ENCODE measurements at regions of chr19 and their contacts with region 1.

Region 1: DNA sequence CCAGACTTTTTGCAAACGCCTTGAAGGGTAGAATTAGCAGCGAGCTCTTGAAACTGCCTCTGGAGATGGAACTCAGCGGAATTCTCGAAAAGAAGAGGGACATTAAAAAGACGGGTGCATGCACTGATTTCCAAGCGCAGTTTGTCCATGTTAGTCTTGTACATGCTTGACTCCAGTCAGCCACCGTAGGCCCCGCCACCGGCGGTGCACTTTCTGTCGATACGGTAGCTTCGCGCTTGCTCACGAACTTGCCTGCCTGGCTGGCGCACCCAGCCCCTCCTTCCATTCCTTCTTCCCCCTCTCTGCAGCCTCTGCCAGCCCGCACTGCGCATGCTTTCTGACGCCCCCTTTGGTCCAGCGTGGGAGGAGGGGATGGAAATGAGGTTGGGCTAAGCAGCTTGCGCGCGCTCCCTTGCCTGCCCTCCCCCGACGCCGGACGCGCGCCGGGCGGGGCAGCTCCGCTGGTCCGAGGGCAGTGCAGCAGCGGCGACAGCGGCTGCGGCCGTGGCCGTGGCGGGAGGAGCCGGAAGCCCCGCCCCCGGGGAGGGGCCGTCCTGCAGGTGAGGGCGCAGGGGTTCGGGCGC is at the start of gene ZNF575:
- DNase-seq: peak; percentile 88 to 93 (median 92)
- H3K4me3 ChIP-seq: peak within 1 kb of the TSS; percentile 65
- H3K27ac ChIP-seq: peak within 1 kb of the TSS; percentile 5 to 74
- H3K4me1 ChIP-seq: peaks cover 5% of the 10 kb centered on the region
- H3K27me3 ChIP-seq: no peaks in the 10 kb centered on the region
- CTCF ChIP-seq: peak in 1 of 3 donors; percentile 10
- EP300 ChIP-seq: no peak
- POLR2A ChIP-seq: no peak
- total RNA-seq, gene ZNF575: 1.3 to 5.9 (median 3.9) TPM

Region 2: GRCh38 chr19:43595999-43596841 is 63.2 kb after region 1 on chr19 and contains the starts of genes IRGQ and ZNF576:
- intact Hi-C with region 1: loop called in 1 of 4 experiments (anchors 5 kb)
- DNase-seq: peak; percentile 100
- H3K4me3 ChIP-seq: peak within 1 kb of the TSS; percentile 59
- H3K27ac ChIP-seq: peak within 1 kb of the TSS; percentile 91 to 99
- H3K4me1 ChIP-seq: peaks cover 10% of the 10 kb centered on the region
- H3K27me3 ChIP-seq: no peaks in the 10 kb centered on the region
- CTCF ChIP-seq: peak in 1 of 3 donors; percentile 31
- EP300 ChIP-seq: peak; percentile 3
- POLR2A ChIP-seq: peak; percentile 46
- total RNA-seq, gene IRGQ: 11.6 to 25.8 (median 19.8) TPM
- total RNA-seq, gene ZNF576: 11.5 to 22.4 (median 16.9) TPM